Naive thymus-derived CD4-positive, alpha-beta T cell (primary cell): ENCODE measurements at regions of chr5 and their contacts with region 1.

Region 1: DNA sequence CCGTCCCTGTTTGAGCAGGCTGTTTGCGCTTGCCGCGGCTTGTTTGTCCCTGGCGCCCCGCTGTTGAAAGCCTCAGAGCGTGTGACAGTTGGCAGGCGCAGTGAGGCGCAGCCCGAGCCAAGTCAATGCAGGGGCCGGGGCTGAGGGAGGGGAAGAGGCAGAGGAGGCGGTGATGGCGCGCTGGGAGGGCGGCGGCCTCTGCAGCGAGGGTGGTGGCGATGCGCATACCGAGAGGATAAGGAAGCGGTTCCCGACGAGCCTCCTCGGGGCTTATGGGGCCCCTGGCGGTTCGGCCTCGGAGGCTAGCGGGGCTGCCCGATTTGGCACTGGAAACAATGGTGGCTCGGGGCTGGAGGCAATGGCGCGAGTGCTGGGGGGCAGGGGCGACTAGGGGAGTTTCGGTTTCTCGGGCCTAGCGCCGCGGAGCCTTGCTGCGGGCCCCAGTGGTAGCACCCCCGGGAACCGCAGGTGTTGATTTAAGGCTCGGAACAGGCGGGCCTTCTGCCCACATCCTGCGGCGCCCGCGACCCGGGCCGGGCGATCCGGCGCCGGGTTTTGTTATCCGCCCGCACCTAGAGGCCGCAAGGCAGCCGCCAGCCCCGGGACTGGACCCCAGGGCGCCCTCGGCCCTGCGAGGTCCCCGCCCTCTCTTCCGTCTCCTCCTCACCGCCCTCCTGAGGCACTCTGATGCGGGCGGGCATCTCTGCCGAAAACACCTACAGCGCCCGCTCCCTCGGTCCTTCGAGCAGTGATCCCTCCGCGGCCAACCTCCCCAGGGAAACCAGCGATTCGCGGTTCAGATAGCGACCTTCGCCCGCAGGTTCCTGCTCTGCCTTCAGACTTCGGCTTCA is 947 bp upstream of the LNPEP start:
- DNase-seq: peak; percentile 92 to 98 (median 97)
- ATAC-seq: peak; percentile 81
- H3K4me3 ChIP-seq: peak overlapping the region; percentile 93
- H3K4me3 Mint-ChIP-seq: peak overlapping the region; percentile 84 to 100 (median 94)
- H3K27ac ChIP-seq: peak overlapping the region; percentile 86
- H3K27ac Mint-ChIP-seq: peak overlapping the region; percentile 95 to 99 (median 97)
- H3K4me1 ChIP-seq: peaks cover 34 to 46% of the 10 kb centered on the region in 2 donors
- H3K4me1 Mint-ChIP-seq: peaks cover 53 to 70% (median 64%) of the 10 kb centered on the region in 7 donors
- H3K27me3 ChIP-seq: no peaks in the 10 kb centered on the region
- H3K27me3 Mint-ChIP-seq: no peaks in the 10 kb centered on the region

Region 2: DNA sequence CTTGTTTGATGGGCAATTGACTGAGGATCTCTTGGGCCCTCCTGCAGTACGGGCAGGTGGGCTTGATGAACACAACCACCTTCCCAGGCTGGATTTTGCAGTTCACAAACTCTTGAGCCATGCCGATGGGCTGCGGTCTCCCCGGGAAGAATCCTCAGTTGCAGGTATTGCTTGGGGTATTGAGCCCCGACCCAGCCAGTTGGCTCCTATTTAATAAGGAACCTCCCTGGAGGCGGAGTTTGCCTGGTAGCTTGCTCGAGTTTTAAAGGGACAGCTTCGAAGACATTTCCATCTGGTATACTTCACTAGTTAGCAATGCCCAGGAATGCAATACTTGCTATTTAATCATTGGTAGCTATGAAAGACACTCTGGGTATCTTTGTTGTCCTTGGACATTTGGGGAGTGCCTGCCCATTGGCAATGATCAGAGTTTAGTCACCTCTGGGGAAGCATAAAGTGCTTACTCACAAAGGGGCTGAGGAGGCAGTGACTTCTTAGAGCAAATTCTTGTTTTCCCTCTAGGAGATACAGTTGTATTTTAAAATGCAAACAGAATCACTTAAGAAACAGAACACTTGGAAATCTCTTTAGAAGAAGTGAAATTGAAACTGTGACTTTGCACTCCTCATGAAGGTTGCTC is 1112.3 kb before region 1 on chr5 and contains the start of gene GLRX:
- CTCF ChIA-PET with region 1: no interaction called
- POLR2A ChIA-PET with region 1: no interaction called
- intact Hi-C with region 1: loop called in 1 of 2 experiments (anchors 5 kb)
- DNase-seq: peak in 8 of 9 donors; percentile 48 to 62 (median 58)
- ATAC-seq: peak; percentile 52
- H3K4me3 ChIP-seq: peak within 1 kb of the TSS; percentile 93
- H3K4me3 Mint-ChIP-seq: peak within 1 kb of the TSS; percentile 91 to 100 (median 99)
- H3K27ac ChIP-seq: peak within 1 kb of the TSS; percentile 84
- H3K27ac Mint-ChIP-seq: peak within 1 kb of the TSS; percentile 91 to 97 (median 95)
- H3K4me1 ChIP-seq: peaks cover 38% of the 10 kb centered on the region in 2 donors
- H3K4me1 Mint-ChIP-seq: peaks cover 53 to 78% (median 61%) of the 10 kb centered on the region in 7 donors
- H3K27me3 ChIP-seq: no peaks in the 10 kb centered on the region
- H3K27me3 Mint-ChIP-seq: no peaks in the 10 kb centered on the region
- total RNA-seq, gene GLRX: 26.3 to 89.5 (median 55.6) TPM

Region 3: DNA sequence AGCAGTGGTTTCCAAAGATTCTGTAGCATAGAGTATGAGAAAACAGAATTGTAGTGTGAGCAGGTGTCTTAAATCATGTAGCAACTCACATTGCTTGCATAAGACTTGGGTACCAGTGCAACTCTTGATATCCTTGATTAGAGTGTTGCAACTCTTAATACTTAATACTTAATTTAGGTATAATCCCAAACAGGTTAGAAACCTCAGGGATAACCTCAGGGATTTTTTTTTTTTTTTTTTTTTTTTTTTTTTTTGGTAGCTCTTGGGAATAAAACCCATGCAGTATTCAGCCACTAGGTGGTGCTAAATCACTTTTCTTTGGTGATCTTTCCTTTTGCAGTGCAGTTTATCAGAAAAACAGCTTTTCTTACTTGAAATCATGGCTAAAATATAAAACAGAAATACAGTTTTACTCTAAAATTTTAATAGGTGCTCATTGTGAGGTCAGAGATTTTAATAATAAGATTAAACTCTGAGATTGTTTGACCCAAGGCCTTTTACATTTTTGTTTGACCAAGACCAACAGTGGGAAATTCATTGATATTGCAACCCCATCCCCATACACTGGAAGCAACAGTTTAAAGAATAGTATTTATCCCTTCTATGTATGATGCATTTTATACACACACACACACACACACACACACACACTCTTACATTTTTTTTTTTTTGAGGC is 182.5 kb before region 1 on chr5:
- CTCF ChIA-PET with region 1: no interaction called
- POLR2A ChIA-PET with region 1: interaction called, 3 read pairs
- intact Hi-C with region 1: loop called in 1 of 2 experiments (anchors 1 kb)
- DNase-seq: peak in 7 of 9 donors; percentile 46 to 72 (median 60)
- ATAC-seq: peak; percentile 70
- H3K4me3 ChIP-seq: no peak overlapping the region
- H3K4me3 Mint-ChIP-seq: no peak overlapping the region
- H3K27ac ChIP-seq: no peak overlapping the region
- H3K27ac Mint-ChIP-seq: peak overlapping the region in 6 of 9 donors; percentile 36 to 67 (median 56)
- H3K4me1 ChIP-seq: no peaks in the 10 kb centered on the region
- H3K4me1 Mint-ChIP-seq: peaks cover 0 to 8% (median 0%) of the 10 kb centered on the region in 7 donors
- H3K27me3 ChIP-seq: no peaks in the 10 kb centered on the region
- H3K27me3 Mint-ChIP-seq: no peaks in the 10 kb centered on the region

Region 4: GRCh38 chr5:96885518-96886338 is 49.2 kb before region 1 on chr5:
- CTCF ChIA-PET with region 1: interaction called, 3 read pairs
- POLR2A ChIA-PET with region 1: interaction called, 9 read pairs
- intact Hi-C with region 1: loop called in 1 of 2 experiments (anchors 2 kb)
- DNase-seq: peak in 7 of 9 donors; percentile 46 to 81 (median 69)
- ATAC-seq: peak; percentile 93
- H3K4me3 ChIP-seq: peak overlapping the region; percentile 38
- H3K4me3 Mint-ChIP-seq: peak overlapping the region; percentile 67 to 87 (median 78)
- H3K27ac ChIP-seq: peak overlapping the region; percentile 63
- H3K27ac Mint-ChIP-seq: peak overlapping the region; percentile 91 to 99 (median 96)
- H3K4me1 ChIP-seq: peaks cover 56 to 58% of the 10 kb centered on the region in 2 donors
- H3K4me1 Mint-ChIP-seq: peaks cover 44 to 76% (median 69%) of the 10 kb centered on the region in 7 donors
- H3K27me3 ChIP-seq: no peaks in the 10 kb centered on the region
- H3K27me3 Mint-ChIP-seq: no peaks in the 10 kb centered on the region

Region 5: DNA sequence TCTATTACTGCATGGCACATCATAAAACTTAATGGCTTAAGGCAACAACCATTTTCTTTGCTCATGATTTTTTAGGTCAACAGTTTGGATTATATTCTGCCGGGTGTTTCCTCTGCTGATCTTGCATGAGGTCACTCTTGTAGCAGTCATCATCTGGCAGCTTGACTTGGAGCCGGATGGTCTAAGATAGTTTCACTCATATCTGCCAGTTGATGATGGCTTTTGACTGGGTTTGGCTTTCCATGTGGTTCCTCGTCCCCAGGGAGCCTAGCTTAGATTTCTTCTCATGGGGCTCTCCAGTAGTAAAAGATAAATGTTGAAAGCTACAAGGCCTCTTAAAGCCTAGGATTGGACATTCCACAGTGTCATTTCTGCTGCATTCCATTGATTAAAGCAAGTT is 28.3 kb after region 1 on chr5:
- CTCF ChIA-PET with region 1: interaction called, 4 read pairs
- POLR2A ChIA-PET with region 1: interaction called, 14 read pairs
- intact Hi-C with region 1: loop called (anchors 1 kb)
- DNase-seq: no peak
- ATAC-seq: peak; percentile 39
- H3K4me3 ChIP-seq: peak overlapping the region; percentile 6
- H3K4me3 Mint-ChIP-seq: peak overlapping the region; percentile 71 to 88 (median 82)
- H3K27ac ChIP-seq: peak overlapping the region; percentile 71
- H3K27ac Mint-ChIP-seq: peak overlapping the region; percentile 84 to 98 (median 95)
- H3K4me1 ChIP-seq: peaks cover 29 to 52% of the 10 kb centered on the region in 2 donors
- H3K4me1 Mint-ChIP-seq: peaks cover 31 to 96% (median 90%) of the 10 kb centered on the region in 7 donors
- H3K27me3 ChIP-seq: no peaks in the 10 kb centered on the region
- H3K27me3 Mint-ChIP-seq: no peaks in the 10 kb centered on the region

Region 6: GRCh38 chr5:97094579-97095317 is 159.8 kb after region 1 on chr5:
- CTCF ChIA-PET with region 1: no interaction called
- POLR2A ChIA-PET with region 1: no interaction called
- intact Hi-C with region 1: loop called in 1 of 2 experiments (anchors 1 kb)
- DNase-seq: peak in 1 of 9 donors; percentile 28
- ATAC-seq: no peak
- H3K4me3 ChIP-seq: no peak overlapping the region
- H3K4me3 Mint-ChIP-seq: peak overlapping the region in 1 of 10 donors; percentile 62
- H3K27ac ChIP-seq: no peak overlapping the region
- H3K27ac Mint-ChIP-seq: peak overlapping the region in 1 of 9 donors; percentile 63
- H3K4me1 ChIP-seq: no peaks in the 10 kb centered on the region
- H3K4me1 Mint-ChIP-seq: peaks cover 0 to 20% (median 5%) of the 10 kb centered on the region in 7 donors
- H3K27me3 ChIP-seq: no peaks in the 10 kb centered on the region
- H3K27me3 Mint-ChIP-seq: peaks cover 0 to 43% (median 1%) of the 10 kb centered on the region in 5 donors

Region 7: DNA sequence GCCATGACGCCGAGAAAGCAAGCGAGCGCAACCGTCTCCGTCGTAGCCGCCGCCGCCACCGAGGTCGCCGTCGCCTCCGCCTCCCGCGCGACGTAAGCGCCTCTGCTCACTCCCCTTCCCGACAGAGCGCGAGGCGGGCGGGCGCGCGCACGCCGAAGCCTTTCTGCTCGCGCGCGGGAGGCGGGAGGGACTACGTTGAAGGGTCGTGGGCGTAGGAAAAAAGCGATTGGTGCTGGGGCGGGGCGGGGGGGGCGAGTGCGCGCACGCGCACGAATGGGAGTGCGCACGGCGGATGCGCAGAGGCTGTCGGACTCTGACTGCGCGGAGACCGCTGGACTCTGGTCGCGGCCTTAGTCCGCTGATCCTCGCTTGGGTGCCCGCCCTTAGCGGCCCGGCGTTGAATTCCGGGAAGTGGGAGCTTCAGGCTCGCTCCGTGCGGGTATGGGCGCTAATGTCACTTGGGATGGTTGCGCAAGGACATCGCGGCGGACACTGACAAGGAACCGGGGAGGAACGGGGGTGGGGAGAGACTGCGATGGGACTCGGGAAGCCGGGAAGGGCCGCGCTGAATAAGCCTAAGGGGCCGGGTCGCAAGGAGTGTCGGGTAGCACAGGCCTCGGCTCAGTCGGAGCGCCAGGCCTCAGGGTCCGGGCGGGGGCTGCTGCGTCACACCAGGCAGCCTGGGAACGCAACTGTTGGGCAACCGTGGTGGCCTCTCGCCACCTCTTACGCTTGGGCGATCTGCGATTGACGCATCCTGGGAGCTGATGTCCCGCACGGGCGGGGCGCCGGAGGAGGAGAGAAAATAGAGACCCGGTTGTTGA is 1994.2 kb after region 1 on chr5 and contains the start of gene CHD1:
- CTCF ChIA-PET with region 1: no interaction called
- POLR2A ChIA-PET with region 1: interaction called, 4 read pairs
- intact Hi-C with region 1: loop called (anchors 1 kb)
- DNase-seq: peak; percentile 91 to 98 (median 96)
- ATAC-seq: peak; percentile 83
- H3K4me3 ChIP-seq: peak within 1 kb of the TSS; percentile 96
- H3K4me3 Mint-ChIP-seq: peak within 1 kb of the TSS; percentile 93 to 99 (median 98)
- H3K27ac ChIP-seq: peak within 1 kb of the TSS; percentile 98
- H3K27ac Mint-ChIP-seq: peak within 1 kb of the TSS; percentile 94 to 100 (median 99)
- H3K4me1 ChIP-seq: peaks cover 42 to 44% of the 10 kb centered on the region in 2 donors
- H3K4me1 Mint-ChIP-seq: peaks cover 33 to 83% (median 70%) of the 10 kb centered on the region in 7 donors
- H3K27me3 ChIP-seq: no peaks in the 10 kb centered on the region
- H3K27me3 Mint-ChIP-seq: peaks cover 0 to 2% (median 0%) of the 10 kb centered on the region in 5 donors
- total RNA-seq, gene CHD1: 51.8 to 134 (median 92.4) TPM